Dendritic cell treated with granulocyte-macrophage colony-stimulating factor and Interleukin-4, amounts not matched to agents 40 ng/mL and 50 ng/mL, for 4 days (primary cell): ENCODE measurements at regions of chr20 and their contacts with region 1.

Region 1: GRCh38 chr20:37384683-37385174 is 38.8 kb downstream of the SRC start:
- H3K4me3 Mint-ChIP-seq: peak overlapping the region; percentile 70
- H3K27ac Mint-ChIP-seq: peak overlapping the region; percentile 55
- H3K4me1 Mint-ChIP-seq: peaks cover 62% of the 10 kb centered on the region
- H3K27me3 Mint-ChIP-seq: no peaks in the 10 kb centered on the region

Region 2: DNA sequence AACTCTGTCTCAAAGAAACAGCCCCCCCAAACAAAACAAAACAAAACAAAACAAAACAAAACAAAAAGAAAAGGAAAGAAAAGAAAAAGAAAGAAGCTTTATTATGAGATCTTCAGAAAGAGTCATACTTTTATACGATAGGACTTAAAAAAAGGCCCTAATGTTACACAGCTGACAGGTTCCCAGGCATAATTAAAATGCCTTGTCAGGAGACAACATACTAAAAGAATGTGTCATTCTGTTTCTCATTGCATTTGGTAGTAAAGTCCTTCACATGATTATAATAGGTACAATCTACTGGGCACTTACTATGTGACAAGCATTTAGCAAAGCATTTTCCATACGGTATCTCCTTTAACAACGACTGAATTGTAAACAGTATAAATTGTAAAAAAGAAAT is 242.0 kb before region 1 on chr20:
- intact Hi-C with region 1: no loop called
- H3K4me3 Mint-ChIP-seq: no peak overlapping the region
- H3K27ac Mint-ChIP-seq: no peak overlapping the region
- H3K4me1 Mint-ChIP-seq: no peaks in the 10 kb centered on the region
- H3K27me3 Mint-ChIP-seq: no peaks in the 10 kb centered on the region

Region 3: DNA sequence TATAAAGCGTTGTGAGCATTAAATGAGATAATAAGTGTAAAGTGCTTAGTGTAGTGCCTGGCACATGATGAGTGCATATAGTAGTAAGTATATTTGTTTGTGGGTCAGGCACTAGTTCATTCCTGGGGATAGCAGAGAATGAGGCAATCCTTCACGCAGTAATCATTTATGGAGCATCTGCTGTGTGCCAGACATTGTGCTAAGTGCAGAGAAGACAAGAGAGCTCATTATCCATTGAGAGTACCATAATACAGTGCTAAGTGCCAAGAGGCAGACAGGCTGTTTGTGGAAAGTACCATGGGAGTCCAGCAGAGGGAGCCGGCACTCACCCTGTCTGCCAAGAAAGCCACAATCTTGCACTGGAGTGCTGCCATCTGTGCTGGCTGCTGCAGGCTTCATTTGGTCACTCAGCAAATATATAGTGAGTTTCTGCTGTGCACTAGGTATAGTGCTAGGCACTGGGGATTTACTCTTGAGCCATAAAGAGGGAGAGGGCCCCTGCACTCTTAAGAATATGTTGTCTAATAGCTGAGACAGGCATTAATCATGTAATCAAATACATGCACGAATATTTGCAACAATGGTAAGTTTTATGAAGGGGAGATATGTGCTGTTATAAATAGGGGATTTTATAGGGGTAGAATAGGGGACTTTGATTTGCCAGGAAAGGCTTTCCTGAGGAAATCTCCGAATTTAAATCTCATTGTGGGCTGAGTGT is 192.4 kb before region 1 on chr20:
- intact Hi-C with region 1: loop called (anchors 10 kb)
- H3K4me3 Mint-ChIP-seq: no peak overlapping the region
- H3K27ac Mint-ChIP-seq: no peak overlapping the region
- H3K4me1 Mint-ChIP-seq: peaks cover 67% of the 10 kb centered on the region
- H3K27me3 Mint-ChIP-seq: no peaks in the 10 kb centered on the region

Region 4: DNA sequence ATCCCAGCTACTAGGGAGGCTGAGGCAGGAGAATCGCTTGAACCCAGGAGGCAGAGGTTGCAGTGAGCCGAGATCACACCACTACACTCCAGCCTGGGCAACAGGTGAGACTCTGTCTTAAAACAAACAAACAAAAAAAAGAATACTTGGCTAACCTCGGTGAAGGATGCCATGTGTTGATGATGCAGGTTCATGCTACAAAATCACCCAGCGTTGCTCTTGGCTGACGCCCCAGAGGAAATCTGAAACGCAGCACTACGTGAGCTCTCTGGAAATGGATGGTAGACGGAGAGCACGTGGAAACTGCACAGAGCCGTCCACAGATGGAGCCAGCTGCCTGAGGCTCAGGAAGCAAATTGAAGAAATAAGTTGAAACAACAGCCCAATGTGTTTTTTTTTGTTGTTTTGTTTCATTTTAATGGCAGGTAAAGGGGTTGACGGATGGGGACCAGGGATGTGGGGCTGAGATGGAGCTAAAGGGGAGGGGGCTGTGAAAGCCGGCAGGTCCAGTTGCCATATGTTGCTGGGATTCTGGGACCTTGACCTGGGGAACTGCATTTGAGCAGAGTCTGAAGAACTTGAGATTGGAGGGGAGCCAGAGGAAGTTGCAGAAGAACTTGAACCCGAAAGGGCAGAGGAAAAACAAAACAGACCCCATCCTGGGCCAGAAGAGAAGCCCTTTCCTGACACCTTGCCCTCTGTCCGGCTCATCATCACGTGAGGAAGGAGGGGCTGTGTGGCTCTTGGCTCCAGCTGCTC is 108.1 kb before region 1 on chr20:
- intact Hi-C with region 1: loop called (anchors 2 kb)
- H3K4me3 Mint-ChIP-seq: peak overlapping the region; percentile 34
- H3K27ac Mint-ChIP-seq: peak overlapping the region; percentile 86
- H3K4me1 Mint-ChIP-seq: peaks cover 56% of the 10 kb centered on the region
- H3K27me3 Mint-ChIP-seq: no peaks in the 10 kb centered on the region

Region 5: DNA sequence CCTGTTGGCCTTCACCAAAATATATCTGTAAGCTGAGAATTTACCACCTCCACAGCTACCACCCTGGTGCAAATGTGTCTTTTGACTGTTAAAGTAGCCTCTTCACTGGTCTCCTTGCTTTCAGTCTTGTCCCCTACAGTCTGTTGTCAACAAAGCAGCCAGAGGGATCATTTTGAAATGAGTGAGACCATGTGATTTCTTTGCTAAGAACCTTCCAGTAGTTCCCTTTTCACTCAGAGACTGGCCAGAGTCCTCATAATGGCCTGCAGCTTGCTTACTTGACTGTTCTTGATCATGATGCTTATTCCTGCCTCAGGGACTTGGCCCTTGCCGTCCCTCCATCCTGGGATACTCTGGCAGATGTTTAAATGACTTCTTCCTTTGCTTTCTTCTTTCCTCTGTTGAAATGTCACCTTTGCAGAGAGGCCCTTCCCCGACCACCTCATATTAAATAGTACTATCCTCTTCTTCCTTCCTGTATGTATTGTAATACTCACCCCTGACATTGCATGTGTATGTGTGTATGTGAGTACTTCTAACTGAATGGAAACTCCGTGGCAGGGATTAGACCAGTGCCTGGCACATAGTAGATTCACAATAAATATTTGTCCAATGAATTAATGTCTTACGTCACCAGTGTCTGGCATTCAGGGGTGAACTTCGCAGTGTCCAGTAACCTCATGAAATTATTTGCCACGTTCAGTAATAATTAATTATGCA is 90.3 kb before region 1 on chr20:
- intact Hi-C with region 1: loop called (anchors 5 kb)
- H3K4me3 Mint-ChIP-seq: peak overlapping the region; percentile 5
- H3K27ac Mint-ChIP-seq: peak overlapping the region; percentile 94
- H3K4me1 Mint-ChIP-seq: peaks cover 61% of the 10 kb centered on the region
- H3K27me3 Mint-ChIP-seq: no peaks in the 10 kb centered on the region

Region 6: DNA sequence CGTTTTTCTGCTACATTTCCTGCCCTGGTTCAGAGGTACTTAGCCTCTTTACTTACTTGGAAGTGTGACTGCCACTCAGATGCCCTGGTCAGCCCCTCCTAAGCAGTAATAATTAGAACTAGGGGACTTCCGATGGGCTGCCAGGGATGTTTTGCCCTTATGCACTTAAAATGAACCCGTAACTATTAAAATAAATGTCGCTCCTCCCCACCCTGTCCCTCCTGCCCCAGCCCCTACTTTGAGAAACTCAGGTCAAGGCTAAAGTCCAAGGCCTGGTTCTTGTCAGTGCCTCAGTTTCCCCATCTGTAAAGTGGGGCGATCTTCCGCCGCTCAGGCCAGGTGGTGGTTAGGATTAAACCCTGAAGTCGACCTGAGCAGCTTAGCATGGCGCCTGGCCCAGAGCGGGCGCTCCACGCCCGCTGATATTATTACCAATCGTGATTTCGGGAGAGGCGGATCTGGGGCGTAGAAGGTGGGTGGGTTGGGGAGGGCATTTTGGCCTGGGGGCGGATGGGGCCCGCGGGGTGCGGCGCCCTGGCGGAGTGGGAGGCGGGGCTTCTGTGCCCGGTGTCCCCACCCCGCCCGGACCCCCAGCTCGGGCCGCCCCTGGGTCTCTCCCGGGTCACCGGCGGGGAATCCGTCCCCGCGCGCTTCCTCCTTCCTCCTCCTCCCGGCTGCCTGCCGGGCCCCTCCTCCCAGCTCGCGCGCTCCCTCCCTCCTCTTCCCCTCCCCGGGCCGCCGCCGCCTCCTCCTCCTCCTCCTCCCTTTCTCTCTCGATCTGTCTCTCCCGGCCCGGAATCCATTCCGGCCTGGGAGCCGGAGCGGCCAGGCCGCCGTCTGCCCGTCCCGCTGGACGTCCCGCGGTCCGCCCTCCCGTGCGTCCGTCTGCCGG is 39.1 kb before region 1 on chr20 and contains the start of gene SRC:
- intact Hi-C with region 1: loop called (anchors 5 kb)
- H3K4me3 Mint-ChIP-seq: peak within 1 kb of the TSS; percentile 71
- H3K27ac Mint-ChIP-seq: peak within 1 kb of the TSS; percentile 91
- H3K4me1 Mint-ChIP-seq: peaks cover 74% of the 10 kb centered on the region
- H3K27me3 Mint-ChIP-seq: peaks cover 4% of the 10 kb centered on the region

Region 7: GRCh38 chr20:37501940-37502339 is 117.2 kb after region 1 on chr20:
- intact Hi-C with region 1: no loop called
- H3K4me3 Mint-ChIP-seq: no peak overlapping the region
- H3K27ac Mint-ChIP-seq: no peak overlapping the region
- H3K4me1 Mint-ChIP-seq: peaks cover 3% of the 10 kb centered on the region
- H3K27me3 Mint-ChIP-seq: no peaks in the 10 kb centered on the region